ENCODE measurements at regions of chr15 and their contacts with region 1.

Region 1: DNA sequence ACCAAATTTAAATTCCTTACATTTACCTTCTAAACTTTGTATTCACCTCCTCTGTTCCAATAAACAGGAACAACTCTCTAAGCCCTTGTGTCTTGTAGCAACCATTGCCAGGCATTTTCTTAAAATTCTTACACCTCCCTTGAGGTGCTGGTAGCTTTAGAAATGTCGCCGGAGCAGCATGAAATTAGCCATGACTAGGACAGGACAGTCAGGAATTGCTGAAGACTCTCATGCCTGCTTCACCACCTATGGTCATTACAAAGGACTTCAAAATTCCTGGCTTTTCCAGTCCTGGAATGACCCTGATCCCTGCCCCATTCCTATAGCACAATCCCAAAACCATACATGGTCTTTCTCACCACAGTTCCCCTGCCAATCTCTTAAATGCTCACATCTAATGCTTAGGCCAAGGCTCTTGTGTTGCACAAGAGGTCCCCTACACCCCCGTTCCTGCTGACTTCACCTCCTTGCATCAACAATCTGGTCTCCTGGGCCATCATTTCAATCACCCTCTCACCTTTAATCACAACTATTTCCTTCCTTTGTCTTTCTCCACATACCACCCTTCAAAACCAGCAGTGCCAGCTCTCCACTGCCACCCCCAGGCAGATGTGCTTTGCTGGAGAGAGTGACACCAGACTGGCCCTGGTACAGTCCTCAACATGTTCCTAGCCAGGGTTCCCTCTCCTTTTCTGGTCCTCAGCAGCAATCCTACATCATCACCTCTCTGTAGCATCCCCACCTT is 113.2 kb upstream of the TJP1 start:
- DNase-seq: no peak
- ATAC-seq: peak in 3 of 4 donors; percentile 51 to 68 (median 51)
- H3K4me3 ChIP-seq: no peak overlapping the region
- H3K27ac ChIP-seq: no peak overlapping the region
- H3K4me1 ChIP-seq: no peaks in the 10 kb centered on the region
- H3K27me3 ChIP-seq: no peaks in the 10 kb centered on the region
- CTCF ChIP-seq: peak; percentile 2 to 28 (median 20)
- POLR2A ChIP-seq: no peak

Region 2: GRCh38 chr15:29883126-29883525 is 52.3 kb before region 1 on chr15:
- intact Hi-C with region 1: no loop called
- DNase-seq: no peak
- ATAC-seq: no peak
- H3K4me3 ChIP-seq: no peak overlapping the region
- H3K27ac ChIP-seq: no peak overlapping the region
- H3K4me1 ChIP-seq: no peaks in the 10 kb centered on the region
- H3K27me3 ChIP-seq: no peaks in the 10 kb centered on the region
- CTCF ChIP-seq: no peak
- POLR2A ChIP-seq: no peak

Region 3: DNA sequence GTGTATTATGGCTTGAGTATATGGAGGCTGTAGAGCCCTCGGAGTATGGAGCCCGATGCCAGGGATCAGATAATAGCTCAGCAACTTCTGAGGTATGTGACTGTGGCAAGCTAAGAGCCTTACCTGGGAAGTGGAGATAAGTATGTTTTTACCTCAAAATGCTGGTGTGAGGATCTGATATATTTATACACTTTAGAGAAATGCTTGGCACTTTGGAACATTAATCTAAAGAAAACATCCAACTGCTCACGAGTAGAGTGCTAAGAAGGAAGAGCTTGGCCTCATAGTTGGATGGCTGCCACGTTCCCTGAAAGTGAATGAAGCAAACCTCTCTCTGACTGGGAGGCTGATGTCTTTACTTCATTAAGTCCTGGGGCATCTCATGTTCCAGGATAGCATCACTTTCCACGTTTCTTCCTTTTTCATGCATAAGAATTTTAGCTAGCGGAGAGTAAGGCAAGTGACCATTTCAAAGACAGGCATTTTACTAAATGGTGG is 88.4 kb after region 1 on chr15:
- intact Hi-C with region 1: loop called in 1 of 2 experiments (anchors 5 kb)
- DNase-seq: no peak
- ATAC-seq: no peak
- H3K4me3 ChIP-seq: no peak overlapping the region
- H3K27ac ChIP-seq: no peak overlapping the region
- H3K4me1 ChIP-seq: no peaks in the 10 kb centered on the region
- H3K27me3 ChIP-seq: no peaks in the 10 kb centered on the region
- CTCF ChIP-seq: no peak
- POLR2A ChIP-seq: no peak

Measured in right lobe of liver (tissue), 6 donors.